Tibial artery (tissue), 4 donors: ENCODE measurements at regions of chr2 and their contacts with region 1.

Region 1: DNA sequence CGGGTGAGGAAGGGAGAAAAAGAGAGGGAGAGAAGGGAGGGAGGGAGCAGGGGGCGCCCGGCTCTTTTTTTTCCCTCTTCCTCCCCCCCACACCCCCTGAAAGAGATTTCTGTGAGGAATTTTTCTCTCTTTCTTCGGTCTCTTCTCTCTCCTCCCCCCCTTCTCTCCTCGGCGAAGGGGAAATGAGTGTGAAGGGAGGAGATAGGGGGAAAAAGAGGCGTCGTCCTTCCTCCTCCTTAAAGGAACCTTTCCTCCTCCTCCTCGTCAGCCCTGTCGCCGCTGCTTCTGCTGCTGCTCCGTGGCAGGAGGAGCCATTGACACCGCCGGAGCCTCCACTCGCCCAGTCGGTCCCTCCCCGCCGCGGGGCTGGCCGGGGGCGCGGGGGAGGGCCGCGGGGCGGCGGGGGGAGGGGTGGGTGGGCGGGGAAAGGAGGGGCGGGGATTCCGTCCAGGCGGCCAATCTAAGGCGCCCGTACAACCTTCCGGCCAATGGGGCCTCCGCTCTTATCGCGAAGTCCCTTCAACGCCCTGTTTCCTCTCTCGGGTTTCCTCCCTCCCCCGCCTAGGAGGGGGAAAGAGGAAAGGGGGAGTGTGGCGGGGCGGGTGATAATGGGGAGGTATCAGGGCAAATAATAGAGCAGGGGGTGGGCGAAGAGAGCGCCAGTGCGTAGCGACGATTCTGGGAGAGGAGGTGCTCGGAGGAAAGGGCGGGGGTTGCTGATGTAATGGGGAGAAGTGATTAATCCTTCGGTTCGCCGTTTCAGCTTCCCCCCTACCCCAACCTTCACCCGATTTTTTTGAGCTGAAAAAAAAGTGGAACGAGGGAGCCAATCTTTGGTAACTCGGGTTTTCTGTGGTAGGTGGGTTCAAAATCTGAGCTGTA is at the start of gene FBXO11:
- DNase-seq: peak; percentile 98 to 99
- H3K4me3 ChIP-seq: peak within 1 kb of the TSS; percentile 96 to 100
- H3K27ac ChIP-seq: peak within 1 kb of the TSS; percentile 98 to 100
- H3K4me1 ChIP-seq: peaks cover 0 to 26% (median 2%) of the 10 kb centered on the region in 4 donors
- H3K27me3 ChIP-seq: no peaks in the 10 kb centered on the region
- CTCF ChIP-seq: peak; percentile 56 to 58

Region 2: DNA sequence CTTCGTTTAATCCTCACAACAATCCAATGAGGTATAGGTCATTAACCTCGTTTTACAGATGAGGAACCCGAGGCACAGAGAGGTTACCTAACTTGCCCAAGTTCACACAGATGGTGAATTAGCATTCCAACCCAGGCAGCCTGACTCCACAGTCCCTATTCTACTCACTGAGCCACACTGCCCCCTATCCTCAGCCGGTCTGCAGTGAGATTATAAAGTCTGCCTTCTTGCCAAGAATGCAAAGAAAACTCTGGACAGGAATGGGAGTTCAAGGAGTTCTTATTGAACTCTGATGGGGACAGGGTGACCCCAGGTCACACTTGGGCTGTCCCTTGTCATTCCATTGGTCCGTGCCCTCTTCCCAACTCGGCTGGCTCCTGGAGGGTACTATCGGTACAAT is 241.6 kb before region 1 on chr2:
- intact Hi-C with region 1: no loop called
- DNase-seq: no peak
- H3K4me3 ChIP-seq: no peak overlapping the region
- H3K27ac ChIP-seq: no peak overlapping the region
- H3K4me1 ChIP-seq: no peaks in the 10 kb centered on the region
- H3K27me3 ChIP-seq: no peaks in the 10 kb centered on the region
- CTCF ChIP-seq: no peak

Region 3: GRCh38 chr2:47782671-47783485 is 123.5 kb before region 1 on chr2 and contains the start of gene MSH6:
- intact Hi-C with region 1: loop called (anchors 5 kb)
- DNase-seq: peak; percentile 81 to 93
- H3K4me3 ChIP-seq: peak within 1 kb of the TSS; percentile 86 to 98
- H3K27ac ChIP-seq: peak within 1 kb of the TSS; percentile 90 to 93
- H3K4me1 ChIP-seq: peaks cover 0 to 26% (median 12%) of the 10 kb centered on the region in 4 donors
- H3K27me3 ChIP-seq: no peaks in the 10 kb centered on the region
- CTCF ChIP-seq: no peak